Tibial artery (tissue), 4 donors: ENCODE measurements at regions of chr15 and their contacts with region 1.

Region 1: GRCh38 chr15:55108858-55109518 is 87.8 kb downstream of the RSL24D1 start:
- DNase-seq: peak; percentile 65 to 82
- H3K4me3 ChIP-seq: no peak overlapping the region
- H3K27ac ChIP-seq: no peak overlapping the region
- H3K4me1 ChIP-seq: no peaks in the 10 kb centered on the region
- H3K27me3 ChIP-seq: no peaks in the 10 kb centered on the region
- CTCF ChIP-seq: peak; percentile 52 to 54

Region 2: DNA sequence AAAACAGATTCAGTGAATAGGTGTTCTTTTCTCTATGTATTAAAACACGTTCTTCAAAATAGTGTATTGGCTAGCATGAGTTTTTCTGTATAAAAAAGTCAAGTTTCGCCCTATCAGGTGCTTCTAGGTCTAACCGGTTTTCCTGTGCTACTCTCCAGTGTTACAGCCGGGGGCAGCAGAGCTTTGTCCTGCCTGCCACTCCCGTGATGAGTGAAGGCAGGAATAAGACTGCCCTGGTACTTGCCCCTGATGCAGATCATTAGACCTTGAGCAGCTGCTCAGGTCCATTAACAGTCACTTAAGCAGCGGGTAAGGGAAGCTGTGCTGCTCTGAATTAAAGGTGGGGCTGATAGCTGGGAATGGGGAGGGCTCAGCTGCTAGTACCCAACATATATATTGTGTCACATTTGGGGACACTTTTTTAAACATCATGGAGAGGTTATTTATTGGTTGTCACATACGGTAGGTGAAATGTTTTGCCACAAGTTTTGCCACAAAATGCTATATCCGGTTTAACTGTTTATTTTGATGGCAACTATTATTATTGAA is 1132.1 kb before region 1 on chr15:
- intact Hi-C with region 1: loop called (anchors 10 kb)
- DNase-seq: peak; percentile 25 to 72
- H3K4me3 ChIP-seq: peak overlapping the region in 1 of 2 donors; percentile 61
- H3K27ac ChIP-seq: peak overlapping the region; percentile 76 to 80
- H3K4me1 ChIP-seq: no peaks in the 10 kb centered on the region
- H3K27me3 ChIP-seq: no peaks in the 10 kb centered on the region
- CTCF ChIP-seq: peak; percentile 64 to 77

Region 3: DNA sequence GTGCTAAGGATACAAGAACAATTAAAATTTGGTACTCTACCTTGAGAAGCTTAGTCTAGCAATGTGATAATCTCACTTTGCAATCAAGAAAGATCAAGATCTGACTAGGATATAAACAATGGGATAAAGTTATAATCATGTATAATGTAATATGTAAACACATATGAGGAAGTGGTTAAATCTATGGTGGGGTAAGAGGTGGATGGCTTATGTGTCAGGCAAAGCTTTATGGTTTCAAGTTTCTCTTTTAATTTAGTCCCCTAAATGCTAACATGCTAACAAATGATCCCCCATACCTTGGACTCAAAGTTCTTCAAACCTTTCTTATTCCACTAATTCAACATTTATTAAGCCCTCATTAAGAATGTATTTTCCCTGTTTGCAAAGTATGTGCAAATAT is 85.3 kb after region 1 on chr15:
- intact Hi-C with region 1: no loop called
- DNase-seq: no peak
- H3K4me3 ChIP-seq: no peak overlapping the region
- H3K27ac ChIP-seq: no peak overlapping the region
- H3K4me1 ChIP-seq: peaks cover 0 to 43% (median 15%) of the 10 kb centered on the region in 4 donors
- H3K27me3 ChIP-seq: no peaks in the 10 kb centered on the region
- CTCF ChIP-seq: no peak